B cell (primary cell): ENCODE measurements at regions of chr9 and their contacts with region 1.

Region 1: DNA sequence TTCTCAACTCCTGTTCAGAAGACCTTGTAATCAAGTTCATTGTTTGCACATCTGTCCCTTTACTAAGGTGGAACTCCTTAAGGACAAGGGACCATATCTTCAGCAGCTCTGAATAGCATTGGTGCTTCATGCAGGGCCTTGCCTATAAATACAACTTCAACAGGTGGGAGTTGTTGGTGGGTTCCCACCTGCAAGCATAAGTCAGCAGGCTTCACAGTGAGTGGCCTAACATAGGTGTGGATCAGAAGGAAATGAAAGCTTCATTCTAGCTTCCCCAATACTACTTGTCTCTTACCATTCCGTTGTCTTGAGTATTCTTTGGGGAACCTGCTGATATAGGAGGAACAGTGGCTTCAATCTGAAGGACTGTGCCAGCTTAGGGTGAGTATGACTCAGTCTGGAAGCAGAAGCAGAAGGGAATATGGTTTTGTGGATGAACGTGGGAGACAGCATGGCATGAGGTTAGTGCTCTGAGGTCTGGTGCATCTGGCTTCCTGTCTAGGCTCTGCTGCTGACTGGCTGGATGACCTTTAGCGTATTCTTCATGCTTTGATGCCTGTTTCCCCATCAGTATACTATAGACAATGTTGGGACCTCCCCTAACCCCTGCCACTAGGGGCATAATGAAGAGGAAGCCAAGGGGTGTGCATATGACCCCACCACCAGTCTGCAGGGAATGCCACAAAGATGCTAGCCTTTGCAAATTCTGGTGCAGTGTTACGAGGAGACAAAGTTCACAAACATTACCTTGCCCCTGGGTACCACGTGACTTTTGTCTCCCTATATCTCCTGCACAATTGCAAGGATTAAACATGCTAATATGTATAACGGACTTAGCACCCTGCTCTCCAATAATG is 192.3 kb downstream of the PALM2AKAP2 start:
- DNase-seq: peak; percentile 85
- ATAC-seq: peak; percentile 73
- H3K4me3 ChIP-seq: peak overlapping the region in 1 of 5 experiments; percentile 13
- H3K4me3 Mint-ChIP-seq: peak overlapping the region; percentile 76
- H3K27ac ChIP-seq: peak overlapping the region; percentile 90 to 93
- H3K27ac Mint-ChIP-seq: peak overlapping the region; percentile 98
- H3K4me1 ChIP-seq: peaks cover 99 to 100% of the 10 kb centered on the region in 2 donors
- H3K4me1 Mint-ChIP-seq: peaks cover 95% of the 10 kb centered on the region
- H3K27me3 ChIP-seq: no peaks in the 10 kb centered on the region
- H3K27me3 Mint-ChIP-seq: no peaks in the 10 kb centered on the region
- CTCF ChIP-seq: peak; percentile 68

Region 2: DNA sequence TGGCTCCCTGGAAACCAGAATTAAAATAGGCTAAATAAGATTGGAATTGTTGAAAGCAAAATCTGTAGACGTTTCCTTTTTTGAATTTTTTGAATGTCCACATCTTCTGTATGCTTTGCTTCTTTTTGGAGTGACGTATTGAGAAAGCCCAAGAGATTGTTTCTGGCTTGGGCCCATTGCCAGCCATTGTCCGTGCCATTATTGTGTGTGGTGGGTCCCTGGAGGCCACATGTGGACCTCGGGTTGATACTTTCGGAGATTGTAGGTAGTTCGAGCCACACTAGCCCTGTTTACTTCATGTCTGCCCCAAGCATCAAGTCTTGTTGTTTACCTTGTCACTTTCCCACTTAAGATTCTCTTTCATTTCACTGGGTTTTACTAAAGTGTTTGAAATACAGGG is 86.2 kb before region 1 on chr9:
- CTCF ChIA-PET with region 1: no interaction called
- POLR2A ChIA-PET with region 1: no interaction called
- intact Hi-C with region 1: no loop called
- DNase-seq: no peak
- ATAC-seq: no peak
- H3K4me3 ChIP-seq: no peak overlapping the region
- H3K4me3 Mint-ChIP-seq: no peak overlapping the region
- H3K27ac ChIP-seq: no peak overlapping the region
- H3K27ac Mint-ChIP-seq: no peak overlapping the region
- H3K4me1 ChIP-seq: no peaks in the 10 kb centered on the region
- H3K4me1 Mint-ChIP-seq: no peaks in the 10 kb centered on the region
- H3K27me3 ChIP-seq: no peaks in the 10 kb centered on the region
- H3K27me3 Mint-ChIP-seq: peaks cover 2% of the 10 kb centered on the region
- CTCF ChIP-seq: no peak

Region 3: GRCh38 chr9:109918339-109919163 is 53.7 kb before region 1 on chr9:
- CTCF ChIA-PET with region 1: interaction called, 138 read pairs
- POLR2A ChIA-PET with region 1: interaction called, 28 read pairs
- intact Hi-C with region 1: loop called (anchors 1 kb)
- DNase-seq: peak; percentile 75
- ATAC-seq: peak; percentile 71
- H3K4me3 ChIP-seq: peak overlapping the region; percentile 4 to 38 (median 30)
- H3K4me3 Mint-ChIP-seq: peak overlapping the region; percentile 79
- H3K27ac ChIP-seq: peak overlapping the region; percentile 97
- H3K27ac Mint-ChIP-seq: peak overlapping the region; percentile 96
- H3K4me1 ChIP-seq: peaks cover 87 to 90% of the 10 kb centered on the region in 2 donors
- H3K4me1 Mint-ChIP-seq: peaks cover 83% of the 10 kb centered on the region
- H3K27me3 ChIP-seq: no peaks in the 10 kb centered on the region
- H3K27me3 Mint-ChIP-seq: no peaks in the 10 kb centered on the region
- CTCF ChIP-seq: no peak

Region 4: DNA sequence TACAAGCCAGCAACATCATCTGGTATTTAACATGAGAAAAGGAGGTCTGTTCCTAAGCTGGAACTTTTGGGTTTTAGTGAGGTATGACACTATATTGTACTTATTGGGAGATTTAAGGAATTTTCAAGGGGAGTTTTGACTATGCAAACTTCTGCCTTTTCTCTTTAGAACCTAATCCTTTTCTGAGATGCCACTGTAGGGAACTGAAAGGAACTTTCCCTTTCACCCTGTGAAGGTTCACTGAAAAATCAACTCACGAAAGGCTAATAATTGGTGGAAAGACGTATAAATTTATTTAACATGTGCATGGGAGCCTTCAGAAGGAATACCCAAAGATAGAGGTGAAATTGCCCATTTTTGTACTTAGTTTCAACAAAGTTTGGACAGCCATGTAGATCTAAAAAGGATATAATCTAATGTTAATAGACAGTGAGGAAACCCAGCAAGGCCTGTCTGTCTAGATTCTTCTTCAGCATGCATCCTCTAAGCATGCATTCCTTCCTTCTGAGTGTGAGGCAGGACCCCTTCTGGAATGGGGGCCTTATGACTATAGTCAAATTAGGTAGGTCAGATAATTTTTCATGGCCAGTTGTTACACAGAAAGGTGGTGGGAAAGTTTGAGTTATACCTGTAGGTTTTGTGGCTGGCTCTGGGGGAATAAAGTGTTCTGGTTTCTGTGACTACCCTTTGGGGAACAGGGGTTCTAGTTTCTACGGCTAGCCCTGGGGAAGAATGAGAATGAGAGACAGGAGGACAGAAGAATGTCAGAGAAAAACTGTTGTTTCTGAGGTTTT is 35.4 kb after region 1 on chr9:
- CTCF ChIA-PET with region 1: interaction called, 5 read pairs
- POLR2A ChIA-PET with region 1: interaction called, 5 read pairs
- intact Hi-C with region 1: loop called (anchors 5 kb)
- DNase-seq: no peak
- ATAC-seq: no peak
- H3K4me3 ChIP-seq: no peak overlapping the region
- H3K4me3 Mint-ChIP-seq: no peak overlapping the region
- H3K27ac ChIP-seq: no peak overlapping the region
- H3K27ac Mint-ChIP-seq: peak overlapping the region; percentile 39
- H3K4me1 ChIP-seq: peaks cover 15 to 35% of the 10 kb centered on the region in 2 donors
- H3K4me1 Mint-ChIP-seq: peaks cover 40% of the 10 kb centered on the region
- H3K27me3 ChIP-seq: no peaks in the 10 kb centered on the region
- H3K27me3 Mint-ChIP-seq: no peaks in the 10 kb centered on the region
- CTCF ChIP-seq: no peak

Region 5: DNA sequence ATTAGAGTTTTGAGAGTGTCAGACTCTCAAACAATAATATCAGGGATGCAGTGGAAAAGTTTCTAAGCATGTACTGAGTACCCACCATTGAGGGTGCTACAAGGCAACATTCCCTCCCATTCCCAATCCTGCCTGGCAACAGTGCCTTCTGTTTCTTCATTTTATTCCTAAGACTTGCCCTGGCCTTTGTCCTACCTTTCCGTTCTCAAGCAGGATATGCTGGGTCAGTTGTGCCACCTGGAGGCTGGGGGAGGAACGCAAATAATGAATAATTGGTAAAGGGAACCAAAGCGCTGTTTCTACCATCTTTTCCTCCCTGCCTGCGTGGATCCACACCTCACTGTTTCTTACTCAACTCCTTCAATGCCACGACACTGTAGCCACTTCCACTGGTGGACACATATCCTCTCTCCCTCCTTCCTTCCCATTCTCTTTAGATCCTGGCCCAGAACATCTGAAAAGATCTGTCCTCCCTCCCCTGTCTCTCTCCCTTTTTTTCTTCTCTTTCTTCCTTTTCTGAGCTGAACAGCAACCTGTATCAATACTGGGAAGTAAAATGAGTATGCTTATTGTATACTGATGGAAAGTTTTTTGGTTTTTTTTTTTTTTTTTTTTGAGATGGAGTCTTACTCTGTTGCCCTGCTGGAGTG is 86.2 kb after region 1 on chr9:
- CTCF ChIA-PET with region 1: interaction called, 79 read pairs
- POLR2A ChIA-PET with region 1: interaction called, 4 read pairs
- intact Hi-C with region 1: no loop called
- DNase-seq: peak; percentile 75
- ATAC-seq: peak; percentile 65
- H3K4me3 ChIP-seq: no peak overlapping the region
- H3K4me3 Mint-ChIP-seq: peak overlapping the region; percentile 68
- H3K27ac ChIP-seq: peak overlapping the region in 1 of 2 donors; percentile 45
- H3K27ac Mint-ChIP-seq: peak overlapping the region; percentile 80
- H3K4me1 ChIP-seq: peaks cover 57 to 70% of the 10 kb centered on the region in 2 donors
- H3K4me1 Mint-ChIP-seq: peaks cover 76% of the 10 kb centered on the region
- H3K27me3 ChIP-seq: no peaks in the 10 kb centered on the region
- H3K27me3 Mint-ChIP-seq: no peaks in the 10 kb centered on the region
- CTCF ChIP-seq: peak; percentile 77

Region 6: DNA sequence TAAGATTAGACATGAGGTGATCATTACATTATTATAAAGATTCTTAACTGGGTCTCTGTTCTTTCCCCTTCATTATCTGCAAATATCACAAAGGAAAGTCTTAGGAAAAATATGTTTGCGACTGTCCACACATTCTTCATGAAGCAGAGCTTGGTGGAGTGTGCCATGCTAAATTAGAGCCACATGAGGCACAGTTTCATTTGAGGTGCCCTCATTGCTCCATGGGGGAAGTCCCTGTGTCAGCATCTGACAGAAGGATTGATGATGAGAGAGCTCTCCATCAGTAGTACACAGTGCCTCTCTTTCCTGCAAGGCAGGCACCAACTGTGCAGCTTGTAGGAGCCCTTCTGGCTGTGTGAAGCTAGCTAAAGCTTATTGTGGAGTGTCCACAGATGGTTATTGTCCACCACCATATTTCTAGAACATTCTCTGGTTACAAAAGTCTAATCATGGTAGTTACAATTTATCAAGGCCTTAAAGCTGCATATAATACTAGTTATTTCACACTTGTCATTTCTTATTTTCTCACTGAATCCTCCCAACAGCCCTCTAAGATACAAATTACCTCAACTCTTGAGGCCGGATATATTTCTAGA is 171.8 kb after region 1 on chr9:
- CTCF ChIA-PET with region 1: interaction called, 9 read pairs
- POLR2A ChIA-PET with region 1: interaction called, 3 read pairs
- intact Hi-C with region 1: loop called (anchors 5 kb)
- DNase-seq: peak; percentile 74
- ATAC-seq: peak; percentile 76
- H3K4me3 ChIP-seq: peak overlapping the region; percentile 7 to 60 (median 30)
- H3K4me3 Mint-ChIP-seq: peak overlapping the region; percentile 79
- H3K27ac ChIP-seq: peak overlapping the region; percentile 90 to 92
- H3K27ac Mint-ChIP-seq: peak overlapping the region; percentile 86
- H3K4me1 ChIP-seq: peaks cover 83 to 85% of the 10 kb centered on the region in 2 donors
- H3K4me1 Mint-ChIP-seq: peaks cover 90% of the 10 kb centered on the region
- H3K27me3 ChIP-seq: no peaks in the 10 kb centered on the region
- H3K27me3 Mint-ChIP-seq: no peaks in the 10 kb centered on the region
- CTCF ChIP-seq: peak; percentile 20

Region 7: DNA sequence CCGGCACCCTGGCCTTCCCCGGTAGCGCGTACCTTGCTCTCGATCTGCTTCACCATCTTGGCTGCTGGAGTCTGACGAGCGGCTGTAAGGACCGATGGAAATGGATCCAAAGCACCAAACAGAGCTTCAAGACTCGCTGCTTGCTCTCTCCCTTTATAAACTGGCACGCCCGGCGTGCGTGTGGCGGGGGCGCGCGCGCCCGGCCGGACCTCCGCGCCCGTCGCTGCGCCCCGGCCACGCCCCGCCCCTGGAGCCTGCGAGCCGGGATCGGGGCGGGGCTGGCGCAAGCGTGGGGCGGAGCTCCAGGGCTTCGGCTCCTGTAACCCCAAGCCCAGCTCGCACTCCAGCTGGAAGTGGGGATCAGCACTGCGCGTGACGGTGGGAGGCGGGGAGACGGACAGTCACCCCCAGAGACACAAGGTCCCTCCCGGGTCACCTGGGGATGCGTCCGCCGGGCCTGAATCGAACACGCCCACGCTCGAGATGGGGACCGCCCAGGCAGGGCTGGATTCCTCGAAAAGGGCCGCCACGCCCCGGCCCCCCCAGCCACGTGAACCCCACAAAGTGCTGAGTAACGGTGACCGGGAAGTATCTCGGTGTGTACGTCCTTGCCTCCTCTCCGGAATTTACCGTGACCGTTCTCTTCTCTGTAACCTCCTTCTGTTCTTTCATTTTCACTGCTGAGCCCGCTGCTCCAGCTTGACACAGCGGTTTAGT is 284.3 kb after region 1 on chr9 and contains the start of gene TXN:
- CTCF ChIA-PET with region 1: no interaction called
- POLR2A ChIA-PET with region 1: no interaction called
- intact Hi-C with region 1: loop called (anchors 5 kb)
- DNase-seq: peak; percentile 92
- ATAC-seq: peak; percentile 88
- H3K4me3 ChIP-seq: peak within 1 kb of the TSS; percentile 75 to 88 (median 83)
- H3K4me3 Mint-ChIP-seq: peak within 1 kb of the TSS; percentile 92
- H3K27ac ChIP-seq: peak within 1 kb of the TSS; percentile 36 to 66
- H3K27ac Mint-ChIP-seq: peak within 1 kb of the TSS; percentile 92
- H3K4me1 ChIP-seq: peaks cover 5 to 21% of the 10 kb centered on the region in 2 donors
- H3K4me1 Mint-ChIP-seq: peaks cover 26% of the 10 kb centered on the region
- H3K27me3 ChIP-seq: no peaks in the 10 kb centered on the region
- H3K27me3 Mint-ChIP-seq: no peaks in the 10 kb centered on the region
- CTCF ChIP-seq: no peak
- total RNA-seq, gene TXN: 29.0 and 30.6 TPM in 2 replicates